ENCODE measurements at regions of chr2 and their contacts with region 1.

Region 1: GRCh38 chr2:128103407-128103806 is 12.4 kb downstream of the UGGT1 start:
- DNase-seq: no peak
- ATAC-seq: no peak
- H3K4me3 ChIP-seq: no peak overlapping the region
- H3K27ac ChIP-seq: no peak overlapping the region
- H3K4me1 ChIP-seq: no peaks in the 10 kb centered on the region
- H3K27me3 ChIP-seq: no peaks in the 10 kb centered on the region
- CTCF ChIP-seq: no peak
- POLR2A ChIP-seq: no peak
- RAD21 ChIP-seq: no peak

Region 2: GRCh38 chr2:128054104-128054503 is 49.3 kb before region 1 on chr2:
- CTCF ChIA-PET with region 1: no interaction called
- POLR2A ChIA-PET with region 1: no interaction called
- RAD21 ChIA-PET with region 1: no interaction called
- intact Hi-C with region 1: no loop called
- DNase-seq: no peak
- ATAC-seq: no peak
- H3K4me3 ChIP-seq: no peak overlapping the region
- H3K27ac ChIP-seq: no peak overlapping the region
- H3K4me1 ChIP-seq: no peaks in the 10 kb centered on the region
- H3K27me3 ChIP-seq: no peaks in the 10 kb centered on the region
- CTCF ChIP-seq: no peak
- POLR2A ChIP-seq: no peak
- RAD21 ChIP-seq: no peak

Region 3: DNA sequence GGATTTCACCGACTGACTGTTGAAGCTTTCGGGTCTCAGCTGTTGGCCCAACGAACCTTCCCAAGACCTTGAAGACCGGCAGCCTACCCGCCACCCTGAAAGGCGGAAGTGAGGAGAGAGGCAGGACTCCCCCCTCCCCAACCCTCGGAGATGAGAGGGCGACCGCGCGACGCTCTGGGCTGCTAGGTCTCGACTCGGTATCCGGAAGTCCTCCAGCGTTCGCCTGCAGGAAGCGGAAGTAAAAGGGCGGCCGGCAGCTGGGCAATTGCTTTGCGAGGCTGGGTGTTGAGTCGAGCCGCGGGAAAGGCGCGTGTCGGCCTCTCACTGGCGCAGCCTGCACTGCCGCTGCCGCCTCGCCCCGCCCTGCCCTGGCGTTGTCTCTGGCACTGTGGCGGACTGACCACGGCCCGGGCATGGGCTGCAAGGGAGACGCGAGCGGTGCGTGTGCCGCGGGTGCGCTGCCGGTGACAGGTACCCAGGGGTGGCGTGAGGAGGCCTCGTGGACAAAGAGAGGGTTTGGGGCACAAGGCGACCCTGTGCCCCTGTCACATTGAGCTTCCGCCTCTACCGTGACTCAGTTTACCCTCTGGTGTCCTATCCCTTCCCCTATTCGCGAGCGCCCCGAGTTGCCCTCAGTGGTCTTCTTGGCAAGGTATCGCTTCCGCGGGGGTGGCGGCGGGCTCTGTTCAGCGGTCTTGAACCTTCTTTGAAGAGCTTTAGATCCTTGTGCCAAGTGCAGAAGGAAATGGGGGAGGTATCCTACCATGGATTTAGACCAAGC is 12.3 kb before region 1 on chr2 and contains the start of gene UGGT1:
- CTCF ChIA-PET with region 1: no interaction called
- POLR2A ChIA-PET with region 1: interaction called, 15 read pairs
- RAD21 ChIA-PET with region 1: no interaction called
- intact Hi-C with region 1: no loop called
- DNase-seq: peak; percentile 95
- ATAC-seq: peak; percentile 94
- H3K4me3 ChIP-seq: peak within 1 kb of the TSS; percentile 96 to 100
- H3K27ac ChIP-seq: peak within 1 kb of the TSS; percentile 77
- H3K4me1 ChIP-seq: peaks cover 4 to 11% of the 10 kb centered on the region in 2 experiments; a peak in 2 of 4 replicates
- H3K27me3 ChIP-seq: no peaks in the 10 kb centered on the region
- CTCF ChIP-seq: no peak
- POLR2A ChIP-seq: peak; percentile 79
- RAD21 ChIP-seq: no peak
- total RNA-seq, gene UGGT1: 51.8 TPM

Measured in HCT116 (cell line).